ENCODE measurements at regions of chr1 and their contacts with region 1.

Region 1: GRCh38 chr1:116372587-116373444 is at the start of gene ATP1A1:
- DNase-seq: peak; percentile 93
- H3K4me3 Mint-ChIP-seq: peak within 1 kb of the TSS; percentile 94
- H3K27ac Mint-ChIP-seq: peak within 1 kb of the TSS; percentile 78
- H3K4me1 Mint-ChIP-seq: peaks cover 18% of the 10 kb centered on the region
- H3K27me3 Mint-ChIP-seq: no peaks in the 10 kb centered on the region
- CTCF ChIP-seq: no peak
- total RNA-seq, gene ATP1A1: 361 and 378 TPM in 2 replicates

Region 2: GRCh38 chr1:116297495-116298212 is 75.2 kb before region 1 on chr1:
- CTCF ChIA-PET with region 1: no interaction called
- POLR2A ChIA-PET with region 1: no interaction called
- intact Hi-C with region 1: no loop called
- DNase-seq: no peak
- H3K4me3 Mint-ChIP-seq: no peak overlapping the region
- H3K27ac Mint-ChIP-seq: no peak overlapping the region
- H3K4me1 Mint-ChIP-seq: peaks cover 19% of the 10 kb centered on the region
- H3K27me3 Mint-ChIP-seq: no peaks in the 10 kb centered on the region
- CTCF ChIP-seq: no peak

Region 3: DNA sequence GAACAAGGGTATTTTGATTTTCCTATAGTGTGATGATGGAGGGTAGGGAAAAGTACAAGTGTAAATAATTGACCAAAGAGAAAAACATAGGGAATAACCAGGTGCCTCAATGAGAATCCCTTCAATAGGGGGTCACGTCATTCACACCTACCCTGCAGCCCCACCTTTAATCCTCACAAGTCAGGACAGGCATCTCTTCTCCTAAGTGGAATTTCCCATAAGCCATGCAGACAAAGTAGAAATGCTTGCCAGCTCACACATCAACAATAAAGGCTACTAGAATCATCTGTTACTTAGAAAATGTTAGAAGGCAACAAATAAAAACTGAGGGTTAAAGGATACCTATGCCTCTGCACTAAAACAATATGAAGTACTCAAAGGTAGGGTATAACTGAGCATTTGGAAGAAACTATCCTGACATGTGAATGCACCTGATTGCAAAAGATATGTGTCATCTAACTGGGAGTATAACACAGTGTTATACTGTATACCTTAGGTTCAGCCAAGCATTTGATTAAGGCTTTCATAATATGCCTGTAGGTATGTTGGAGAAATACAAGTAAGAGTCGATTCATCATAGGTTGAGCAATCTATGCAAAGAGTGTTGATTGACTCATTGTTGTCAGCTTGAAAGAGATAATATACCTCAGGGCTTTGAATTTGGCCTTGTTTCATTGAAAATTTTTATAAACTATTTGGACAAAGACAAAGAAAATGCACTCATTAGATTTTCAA is 32.1 kb before region 1 on chr1:
- CTCF ChIA-PET with region 1: interaction called, 7 read pairs
- POLR2A ChIA-PET with region 1: interaction called, 110 read pairs
- intact Hi-C with region 1: loop called (anchors 2 kb)
- DNase-seq: peak; percentile 92
- H3K4me3 Mint-ChIP-seq: peak overlapping the region; percentile 16
- H3K27ac Mint-ChIP-seq: peak overlapping the region; percentile 63
- H3K4me1 Mint-ChIP-seq: peaks cover 19% of the 10 kb centered on the region
- H3K27me3 Mint-ChIP-seq: no peaks in the 10 kb centered on the region
- CTCF ChIP-seq: no peak

Region 4: GRCh38 chr1:116345843-116346242 is 27.0 kb before region 1 on chr1:
- CTCF ChIA-PET with region 1: interaction called, 7 read pairs
- POLR2A ChIA-PET with region 1: interaction called, 110 read pairs
- intact Hi-C with region 1: loop called (anchors 2 kb)
- DNase-seq: no peak
- H3K4me3 Mint-ChIP-seq: no peak overlapping the region
- H3K27ac Mint-ChIP-seq: no peak overlapping the region
- H3K4me1 Mint-ChIP-seq: peaks cover 18% of the 10 kb centered on the region
- H3K27me3 Mint-ChIP-seq: no peaks in the 10 kb centered on the region
- CTCF ChIP-seq: no peak

Region 5: DNA sequence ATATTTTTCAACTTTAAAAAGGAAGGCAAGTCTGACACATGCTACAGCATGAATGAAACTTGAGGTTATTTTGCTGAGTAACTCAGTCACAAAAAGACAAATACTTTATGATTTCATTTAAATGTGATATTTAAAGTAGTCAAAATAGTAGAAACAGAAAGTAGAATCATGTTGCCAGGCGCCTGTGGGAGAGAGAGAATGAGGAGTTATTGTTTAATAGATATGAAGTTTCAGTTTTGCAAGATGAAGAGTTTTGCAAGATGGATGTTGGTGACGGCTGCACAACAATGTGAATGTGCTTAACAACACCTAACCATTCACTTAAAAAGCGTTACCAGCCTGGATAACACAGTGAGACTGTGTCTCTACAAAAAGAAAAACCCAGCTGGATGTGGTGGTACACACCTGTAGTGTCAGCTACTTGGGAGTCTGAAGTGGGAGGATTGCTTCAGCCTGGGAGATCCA is 20.4 kb before region 1 on chr1:
- CTCF ChIA-PET with region 1: no interaction called
- POLR2A ChIA-PET with region 1: interaction called, 31 read pairs
- intact Hi-C with region 1: no loop called
- DNase-seq: no peak
- H3K4me3 Mint-ChIP-seq: no peak overlapping the region
- H3K27ac Mint-ChIP-seq: no peak overlapping the region
- H3K4me1 Mint-ChIP-seq: peaks cover 15% of the 10 kb centered on the region
- H3K27me3 Mint-ChIP-seq: no peaks in the 10 kb centered on the region
- CTCF ChIP-seq: no peak

Region 6: GRCh38 chr1:116360429-116361173 is 12.2 kb before region 1 on chr1:
- CTCF ChIA-PET with region 1: interaction called, 3 read pairs
- POLR2A ChIA-PET with region 1: interaction called, 31 read pairs
- intact Hi-C with region 1: no loop called
- DNase-seq: peak; percentile 48
- H3K4me3 Mint-ChIP-seq: no peak overlapping the region
- H3K27ac Mint-ChIP-seq: no peak overlapping the region
- H3K4me1 Mint-ChIP-seq: peaks cover 24% of the 10 kb centered on the region
- H3K27me3 Mint-ChIP-seq: no peaks in the 10 kb centered on the region
- CTCF ChIP-seq: peak; percentile 21

Region 7: DNA sequence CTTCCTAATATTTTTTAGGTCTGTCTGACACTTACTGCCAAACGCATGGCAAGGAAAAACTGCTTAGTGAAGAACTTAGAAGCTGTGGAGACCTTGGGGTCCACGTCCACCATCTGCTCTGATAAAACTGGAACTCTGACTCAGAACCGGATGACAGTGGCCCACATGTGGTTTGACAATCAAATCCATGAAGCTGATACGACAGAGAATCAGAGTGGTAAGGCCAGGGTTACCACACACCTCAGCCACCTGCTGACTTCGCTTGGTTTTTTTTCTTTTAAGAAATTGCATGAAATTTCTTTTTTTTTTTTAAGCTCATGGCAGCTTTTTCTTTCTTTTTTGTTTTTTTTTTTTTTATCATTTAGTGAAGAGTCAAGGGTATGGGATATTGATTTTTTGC is 17.4 kb after region 1 on chr1:
- CTCF ChIA-PET with region 1: interaction called, 7 read pairs
- POLR2A ChIA-PET with region 1: interaction called, 23 read pairs
- intact Hi-C with region 1: no loop called
- DNase-seq: no peak
- H3K4me3 Mint-ChIP-seq: no peak overlapping the region
- H3K27ac Mint-ChIP-seq: no peak overlapping the region
- H3K4me1 Mint-ChIP-seq: peaks cover 43% of the 10 kb centered on the region
- H3K27me3 Mint-ChIP-seq: no peaks in the 10 kb centered on the region
- CTCF ChIP-seq: no peak

Region 8: DNA sequence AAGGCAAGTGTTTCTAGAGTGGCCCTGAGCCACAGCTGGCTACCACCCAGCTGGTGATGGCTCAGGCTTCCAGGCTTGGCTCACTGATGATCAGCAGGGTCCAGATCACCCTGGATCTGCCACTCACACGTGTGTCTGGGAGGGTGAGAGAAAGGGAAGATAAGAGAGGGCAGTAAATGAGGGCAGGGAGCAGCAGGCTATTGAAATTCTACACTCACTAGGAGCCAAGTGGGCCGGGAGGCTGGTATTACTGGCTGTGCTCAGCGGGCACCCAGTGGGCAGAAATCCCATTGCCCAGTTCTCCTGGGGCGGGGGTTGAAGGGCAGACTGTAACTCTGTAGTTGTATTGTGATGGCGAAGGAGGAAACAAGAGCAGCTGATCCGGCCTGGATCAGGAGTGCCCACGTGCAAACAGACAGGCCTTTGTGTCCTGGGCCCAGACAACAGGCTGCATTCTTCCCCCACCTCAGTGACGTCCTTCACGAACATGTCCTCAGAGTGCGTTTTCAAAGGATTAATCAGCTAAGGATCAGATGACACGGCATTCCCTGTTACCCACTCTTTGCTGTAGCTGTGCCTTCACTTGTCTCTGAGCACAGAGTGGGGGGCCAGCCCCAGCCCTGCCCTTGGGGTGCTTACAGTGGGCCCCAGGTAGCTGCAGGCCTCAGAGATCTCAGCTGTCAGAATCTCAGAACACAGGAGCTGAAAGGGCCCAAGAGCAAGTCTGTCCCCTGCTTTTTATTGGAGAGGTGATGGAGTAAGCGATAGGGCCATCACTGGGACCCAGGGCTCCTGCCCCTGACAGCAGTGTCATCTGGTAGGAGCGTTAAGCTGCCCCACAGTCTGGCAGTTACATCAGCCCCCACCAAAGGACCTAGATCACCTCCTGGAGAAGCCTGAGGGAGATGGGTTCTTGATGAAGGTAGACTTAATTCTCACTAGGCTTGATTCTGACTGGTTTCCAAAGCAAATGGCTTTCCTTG is 60.8 kb after region 1 on chr1:
- CTCF ChIA-PET with region 1: no interaction called
- POLR2A ChIA-PET with region 1: no interaction called
- intact Hi-C with region 1: no loop called
- DNase-seq: no peak
- H3K4me3 Mint-ChIP-seq: no peak overlapping the region
- H3K27ac Mint-ChIP-seq: no peak overlapping the region
- H3K4me1 Mint-ChIP-seq: no peaks in the 10 kb centered on the region
- H3K27me3 Mint-ChIP-seq: peaks cover 10% of the 10 kb centered on the region
- CTCF ChIP-seq: no peak

Measured in MCF 10A (cell line).